ENCODE measurements at regions of chr3 and their contacts with region 1.

Region 1: DNA sequence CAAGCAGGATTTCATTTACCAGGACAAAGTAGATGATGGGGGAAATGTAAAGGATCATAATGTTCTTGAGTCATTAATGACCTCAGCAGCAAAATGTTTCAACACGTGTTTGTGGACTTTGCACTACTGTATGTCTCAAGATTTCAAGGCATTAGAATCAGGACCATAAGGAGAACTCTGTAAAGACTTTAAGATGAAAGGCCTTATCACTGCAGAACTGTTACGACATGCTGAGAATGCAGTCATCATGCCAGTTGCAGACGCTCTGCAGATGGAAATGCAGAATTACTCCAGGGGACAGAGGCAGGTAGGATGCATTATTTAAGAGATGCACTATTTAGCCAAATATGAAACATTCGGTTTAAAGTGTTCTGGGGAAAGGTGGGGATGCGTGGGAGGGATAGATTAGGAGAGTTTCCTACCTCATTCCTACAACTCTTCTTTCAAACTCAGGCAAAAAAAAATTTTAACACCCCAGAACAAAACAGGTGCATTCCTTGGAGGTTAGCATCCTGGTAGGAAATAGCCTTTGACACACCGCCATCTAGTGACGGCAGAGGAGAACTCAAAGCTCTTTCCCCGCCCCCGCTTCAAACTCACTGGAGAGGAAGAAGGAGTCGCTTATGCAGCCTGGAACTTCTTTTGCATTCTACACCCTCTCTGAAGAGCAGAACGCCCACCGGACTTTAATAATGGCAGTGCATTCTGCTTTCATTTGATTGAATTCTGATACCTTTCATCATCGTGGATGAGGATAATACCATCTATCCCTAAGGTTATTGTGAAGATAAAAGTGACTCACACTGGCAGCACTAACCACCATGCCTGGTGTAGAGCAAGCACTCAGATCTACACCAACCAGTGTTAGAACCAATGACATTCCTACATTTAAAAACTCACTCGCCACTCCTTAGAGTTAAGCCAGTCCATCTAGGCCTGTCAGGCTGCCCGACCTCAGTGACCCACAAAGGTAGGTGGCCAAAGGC is 43.1 kb upstream of the TOPAZ1 start:
- DNase-seq: peak; percentile 69
- H3K4me3 ChIP-seq: no peak overlapping the region
- H3K27ac ChIP-seq: no peak overlapping the region
- H3K4me1 ChIP-seq: no peaks in the 10 kb centered on the region
- H3K27me3 ChIP-seq: no peaks in the 10 kb centered on the region
- CTCF ChIP-seq: peak; percentile 65

Region 2: GRCh38 chr3:43540624-43541023 is 658.0 kb before region 1 on chr3:
- CTCF ChIA-PET with region 1: no interaction called
- POLR2A ChIA-PET with region 1: no interaction called
- intact Hi-C with region 1: loop called (anchors 10 kb)
- DNase-seq: no peak
- H3K4me3 ChIP-seq: no peak overlapping the region
- H3K27ac ChIP-seq: no peak overlapping the region
- H3K4me1 ChIP-seq: no peaks in the 10 kb centered on the region
- H3K27me3 ChIP-seq: no peaks in the 10 kb centered on the region
- CTCF ChIP-seq: no peak

Region 3: DNA sequence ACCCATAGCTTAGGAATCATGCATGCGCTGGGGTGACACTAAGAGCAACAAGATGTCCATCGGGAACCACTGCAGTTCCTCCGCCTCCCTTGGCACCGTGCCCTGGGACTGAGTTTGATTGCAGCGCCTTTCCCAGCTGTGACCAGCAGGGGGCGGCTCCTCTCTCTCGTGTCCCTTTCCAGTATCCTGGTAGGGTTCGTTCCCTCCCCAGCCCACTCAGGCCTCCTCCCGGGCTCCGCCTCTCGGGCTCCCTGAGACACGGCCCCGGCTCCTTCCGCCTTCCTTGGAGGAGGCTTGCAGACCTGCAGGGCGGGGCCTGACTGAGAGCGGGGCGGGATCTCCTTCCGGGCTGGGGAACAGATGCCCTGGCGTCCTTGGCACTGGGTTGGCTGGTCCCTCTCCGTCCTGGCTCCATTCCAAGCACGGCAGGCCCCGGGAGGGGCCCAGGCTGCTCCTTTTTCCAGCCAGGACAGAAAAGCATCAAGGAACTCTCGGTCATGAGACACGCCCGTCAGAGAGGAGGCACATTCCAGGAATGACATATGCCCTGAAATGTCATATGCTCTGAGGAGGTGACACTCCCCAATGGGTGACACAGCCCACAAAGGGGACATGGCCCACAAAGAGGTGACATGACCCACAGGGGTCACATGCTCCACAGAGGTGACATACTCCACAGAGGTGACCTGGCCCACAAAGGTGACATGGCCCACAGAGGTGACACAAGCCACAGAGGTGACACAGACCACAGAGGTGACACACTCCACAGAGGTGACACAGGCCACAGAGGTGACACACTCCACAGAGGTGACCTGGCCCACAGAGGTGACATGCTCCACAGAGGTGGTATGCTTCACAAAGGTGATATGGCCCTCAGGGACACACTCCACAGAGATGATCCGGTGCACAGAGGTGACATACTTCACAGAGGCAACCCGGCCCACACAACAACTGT is 428.8 kb before region 1 on chr3:
- CTCF ChIA-PET with region 1: interaction called, 3 read pairs
- POLR2A ChIA-PET with region 1: no interaction called
- intact Hi-C with region 1: loop called (anchors 2 kb)
- DNase-seq: peak; percentile 96
- H3K4me3 ChIP-seq: peak overlapping the region; percentile 17
- H3K27ac ChIP-seq: no peak overlapping the region
- H3K4me1 ChIP-seq: peaks cover 6% of the 10 kb centered on the region
- H3K27me3 ChIP-seq: no peaks in the 10 kb centered on the region
- CTCF ChIP-seq: peak; percentile 75

Region 4: GRCh38 chr3:43855674-43856299 is 342.8 kb before region 1 on chr3:
- CTCF ChIA-PET with region 1: interaction called, 4 read pairs
- POLR2A ChIA-PET with region 1: no interaction called
- intact Hi-C with region 1: loop called (anchors 10 kb)
- DNase-seq: peak; percentile 72
- H3K4me3 ChIP-seq: no peak overlapping the region
- H3K27ac ChIP-seq: no peak overlapping the region
- H3K4me1 ChIP-seq: no peaks in the 10 kb centered on the region
- H3K27me3 ChIP-seq: no peaks in the 10 kb centered on the region
- CTCF ChIP-seq: peak; percentile 63

Region 5: DNA sequence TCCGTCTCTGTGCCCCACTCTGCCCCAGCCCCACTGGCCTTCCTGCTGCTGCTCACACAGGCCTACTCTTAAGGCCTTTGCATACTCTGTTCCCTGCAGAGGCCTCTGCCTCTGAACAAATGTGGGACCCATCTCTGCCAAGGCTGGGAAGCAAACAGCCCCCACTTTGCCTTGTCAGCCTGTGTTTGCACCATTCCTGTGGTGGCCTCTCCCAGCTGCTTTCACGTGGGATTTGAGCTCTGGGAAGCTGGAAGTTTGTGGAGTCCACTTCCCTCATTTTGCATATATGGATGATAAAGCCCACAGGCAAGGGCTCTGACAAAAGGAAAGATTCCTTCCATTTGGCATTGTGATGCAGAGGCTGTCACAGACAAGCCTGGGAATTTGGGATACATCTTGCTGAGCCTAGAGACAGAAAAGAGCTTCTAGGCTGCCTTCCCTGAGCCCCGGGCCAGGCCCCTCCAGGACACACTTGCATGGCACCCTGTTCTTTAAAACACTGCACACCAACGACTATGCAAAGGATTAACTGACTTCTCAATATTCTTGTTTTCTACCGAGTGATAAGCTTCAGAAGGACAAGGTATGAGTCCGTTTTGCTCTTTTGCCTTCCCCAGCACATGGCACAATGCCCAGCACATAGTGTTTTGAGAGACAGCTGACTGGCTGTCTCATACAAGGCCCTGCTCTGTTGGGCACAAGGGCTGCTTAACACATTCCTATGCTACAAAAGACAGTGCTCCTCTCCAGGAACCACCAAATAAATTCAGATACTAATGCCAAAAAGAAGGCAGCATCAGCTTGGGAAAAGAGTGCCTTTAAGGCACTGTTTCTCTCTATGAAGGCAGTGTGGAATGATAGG is 77.6 kb before region 1 on chr3:
- CTCF ChIA-PET with region 1: no interaction called
- POLR2A ChIA-PET with region 1: no interaction called
- intact Hi-C with region 1: no loop called
- DNase-seq: no peak
- H3K4me3 ChIP-seq: no peak overlapping the region
- H3K27ac ChIP-seq: no peak overlapping the region
- H3K4me1 ChIP-seq: no peaks in the 10 kb centered on the region
- H3K27me3 ChIP-seq: no peaks in the 10 kb centered on the region
- CTCF ChIP-seq: no peak

Region 6: GRCh38 chr3:44252332-44252959 is 53.9 kb after region 1 on chr3:
- CTCF ChIA-PET with region 1: no interaction called
- POLR2A ChIA-PET with region 1: no interaction called
- intact Hi-C with region 1: no loop called
- DNase-seq: peak; percentile 27
- H3K4me3 ChIP-seq: no peak overlapping the region
- H3K27ac ChIP-seq: no peak overlapping the region
- H3K4me1 ChIP-seq: no peaks in the 10 kb centered on the region
- H3K27me3 ChIP-seq: no peaks in the 10 kb centered on the region
- CTCF ChIP-seq: peak; percentile 15; the same call in 1 of the 2 replicates